HCT116 (cell line): ENCODE measurements at regions of chr19 and their contacts with region 1.

Region 1: DNA sequence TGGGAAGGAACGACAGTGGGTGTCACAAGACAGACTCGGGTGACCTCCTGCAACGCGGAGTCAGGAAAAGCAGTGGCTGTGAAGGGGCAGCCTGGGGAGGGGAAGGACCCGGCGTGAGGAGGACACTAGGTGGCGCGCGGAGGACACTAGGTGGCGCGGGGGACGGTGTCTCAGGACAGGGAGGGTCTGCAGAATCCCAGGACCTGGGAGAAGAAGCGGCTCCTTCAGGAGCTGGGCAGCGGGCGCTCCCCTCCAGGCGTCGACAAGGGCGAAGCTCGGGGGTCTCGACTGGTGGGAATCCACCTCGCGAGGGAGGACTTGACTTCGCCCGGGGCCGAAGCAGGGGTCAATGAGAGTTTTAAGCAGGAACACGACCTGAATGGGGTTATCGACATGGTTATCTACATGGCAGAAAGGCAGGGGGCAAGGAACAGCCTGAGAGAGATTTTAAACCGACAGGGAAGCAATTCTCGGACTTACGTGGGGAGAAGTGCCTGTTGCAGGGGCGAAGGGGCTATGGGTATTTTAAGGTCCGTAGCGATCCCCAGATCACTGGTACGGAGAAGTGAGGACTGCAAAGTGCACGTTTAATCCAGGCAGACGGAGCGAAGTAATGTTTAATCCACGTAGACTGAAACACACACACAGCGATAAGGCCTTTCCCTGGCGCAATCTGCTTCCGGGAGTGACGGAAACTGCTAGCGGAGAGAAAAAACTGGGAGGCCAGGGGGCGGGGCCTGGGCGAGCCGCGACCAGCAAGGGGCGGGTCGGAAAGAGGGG is at the start of gene ZNF616:
- DNase-seq: peak; percentile 85
- ATAC-seq: peak; percentile 89
- H3K4me3 ChIP-seq: peak within 1 kb of the TSS; percentile 81 to 98
- H3K27ac ChIP-seq: peak within 1 kb of the TSS; percentile 98
- H3K4me1 ChIP-seq: peaks cover 6 to 9% of the 10 kb centered on the region in 2 experiments; a peak in 2 of 4 replicates
- H3K27me3 ChIP-seq: no peaks in the 10 kb centered on the region
- CTCF ChIP-seq: peak; percentile 69 to 79 (median 75); a peak in 5 of 6 replicates
- POLR2A ChIP-seq: no peak
- RAD21 ChIP-seq: peak; percentile 67
- total RNA-seq, gene ZNF616: 9.7 TPM

Region 2: DNA sequence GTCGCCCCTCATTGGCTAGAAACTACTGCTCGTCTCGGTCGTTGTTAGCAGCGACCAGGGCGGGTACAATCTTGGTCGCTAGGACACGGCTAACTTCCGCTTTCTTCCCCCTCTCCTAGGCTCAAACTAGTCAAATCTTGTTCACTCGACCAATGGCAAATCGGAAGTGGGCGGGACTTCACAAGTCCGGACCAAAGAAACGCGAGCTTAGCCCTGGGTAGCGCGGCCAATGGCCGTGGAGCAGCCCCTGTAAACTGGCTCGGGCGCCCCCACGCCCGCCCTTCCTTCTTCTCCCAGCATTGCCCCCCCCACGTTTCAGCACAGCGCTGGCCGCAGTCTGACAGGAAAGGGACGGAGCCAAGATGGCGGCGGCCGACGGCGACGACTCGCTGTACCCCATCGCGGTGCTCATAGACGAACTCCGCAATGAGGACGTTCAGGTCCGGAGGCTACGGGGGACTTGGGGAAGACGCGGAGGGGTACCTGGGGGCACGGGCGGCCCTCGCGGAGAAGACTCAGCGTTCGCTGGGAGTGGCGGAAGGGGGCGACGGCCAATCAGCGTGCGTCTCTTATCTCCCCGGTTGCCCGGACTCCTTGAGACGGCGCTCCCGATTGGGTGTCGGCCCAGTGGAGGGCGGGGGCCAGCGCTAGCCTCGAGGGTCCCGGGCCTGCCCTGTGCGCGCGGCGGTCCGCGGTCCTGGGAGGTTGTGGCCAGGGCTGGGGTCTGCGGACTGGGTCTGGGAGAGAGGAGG is 50.5 kb after region 1 on chr19 and contains the start of gene PPP2R1A:
- CTCF ChIA-PET with region 1: no interaction called
- POLR2A ChIA-PET with region 1: interaction called, 3 read pairs
- RAD21 ChIA-PET with region 1: no interaction called
- intact Hi-C with region 1: loop called (anchors 1 kb)
- DNase-seq: peak; percentile 100
- ATAC-seq: peak; percentile 93
- H3K4me3 ChIP-seq: peak within 1 kb of the TSS; percentile 71 to 94
- H3K27ac ChIP-seq: peak within 1 kb of the TSS; percentile 95
- H3K4me1 ChIP-seq: peaks cover 7 to 20% of the 10 kb centered on the region in 2 experiments; a peak in 3 of 4 replicates
- H3K27me3 ChIP-seq: no peaks in the 10 kb centered on the region
- CTCF ChIP-seq: no peak
- POLR2A ChIP-seq: no peak
- RAD21 ChIP-seq: no peak
- total RNA-seq, gene PPP2R1A: 266 TPM

Region 3: GRCh38 chr19:52221831-52222375 is 82.5 kb after region 1 on chr19:
- CTCF ChIA-PET with region 1: no interaction called
- POLR2A ChIA-PET with region 1: no interaction called
- RAD21 ChIA-PET with region 1: no interaction called
- intact Hi-C with region 1: no loop called
- DNase-seq: no peak
- ATAC-seq: no peak
- H3K4me3 ChIP-seq: no peak overlapping the region
- H3K27ac ChIP-seq: no peak overlapping the region
- H3K4me1 ChIP-seq: no peaks in the 10 kb centered on the region
- H3K27me3 ChIP-seq: no peaks in the 10 kb centered on the region
- CTCF ChIP-seq: no peak
- POLR2A ChIP-seq: no peak
- RAD21 ChIP-seq: no peak

Region 4: DNA sequence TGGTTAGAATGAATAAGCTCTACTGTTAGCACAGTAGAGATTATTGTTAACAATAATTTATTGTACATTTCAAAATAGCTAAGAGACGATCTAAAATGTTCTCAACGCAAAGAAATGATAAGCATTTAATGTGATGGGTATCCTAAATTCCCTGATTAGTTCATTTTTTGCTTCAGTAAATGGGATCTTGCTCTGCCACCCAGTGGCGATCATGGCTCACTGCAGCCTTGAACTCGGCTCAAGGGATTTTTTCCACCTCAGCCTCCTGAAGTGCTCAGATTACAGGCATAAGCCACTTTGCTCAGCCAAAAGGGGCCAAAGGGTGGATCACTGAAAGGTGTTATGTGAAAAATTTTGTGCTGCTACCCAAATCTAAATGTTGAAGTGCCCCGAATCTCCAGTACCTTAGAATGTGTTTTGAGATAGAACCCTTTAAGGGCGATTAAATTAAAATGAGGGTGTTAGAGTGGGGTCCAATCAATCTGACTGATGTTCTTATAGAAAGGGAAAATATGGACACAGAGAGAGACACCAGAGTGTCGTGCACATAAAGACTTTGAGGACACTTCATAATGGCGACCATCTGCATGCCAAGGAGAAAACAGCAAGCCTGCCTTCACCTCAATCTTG is 98.4 kb after region 1 on chr19:
- CTCF ChIA-PET with region 1: interaction called, 4 read pairs
- POLR2A ChIA-PET with region 1: no interaction called
- RAD21 ChIA-PET with region 1: no interaction called
- intact Hi-C with region 1: loop called (anchors 1 kb)
- DNase-seq: peak; percentile 44
- ATAC-seq: peak; percentile 71
- H3K4me3 ChIP-seq: no peak overlapping the region
- H3K27ac ChIP-seq: no peak overlapping the region
- H3K4me1 ChIP-seq: no peaks in the 10 kb centered on the region
- H3K27me3 ChIP-seq: no peaks in the 10 kb centered on the region
- CTCF ChIP-seq: peak; percentile 57 to 82 (median 82); a peak in 5 of 6 replicates
- POLR2A ChIP-seq: no peak
- RAD21 ChIP-seq: peak; percentile 79

Region 5: GRCh38 chr19:52778811-52779210 is 639.4 kb after region 1 on chr19:
- CTCF ChIA-PET with region 1: no interaction called
- POLR2A ChIA-PET with region 1: no interaction called
- RAD21 ChIA-PET with region 1: no interaction called
- intact Hi-C with region 1: loop called (anchors 10 kb)
- DNase-seq: no peak
- ATAC-seq: no peak
- H3K4me3 ChIP-seq: no peak overlapping the region
- H3K27ac ChIP-seq: no peak overlapping the region
- H3K4me1 ChIP-seq: no peaks in the 10 kb centered on the region
- H3K27me3 ChIP-seq: no peaks in the 10 kb centered on the region
- CTCF ChIP-seq: no peak
- POLR2A ChIP-seq: no peak
- RAD21 ChIP-seq: no peak